PC-9 (cell line): ENCODE measurements at regions of chr3 and their contacts with region 1.

Region 1: DNA sequence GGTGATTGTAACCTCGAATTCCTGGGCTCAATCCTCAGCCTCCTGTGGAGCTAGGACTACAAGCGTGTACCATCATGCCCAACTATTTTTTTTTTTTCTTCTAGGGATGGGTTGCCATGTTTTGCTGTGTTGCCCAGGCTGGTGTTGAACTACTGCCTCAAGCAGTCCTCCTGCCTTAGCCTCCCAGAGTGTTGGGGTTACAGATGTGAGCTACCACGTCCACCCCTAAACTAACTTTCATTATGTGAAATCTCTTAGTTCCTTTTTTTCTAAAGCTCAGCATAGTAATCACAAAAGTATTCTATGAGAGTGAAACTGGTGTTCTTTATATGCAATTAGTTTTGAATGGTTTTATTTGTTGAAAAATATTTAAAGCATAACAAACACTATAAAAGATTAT is 92.1 kb downstream of the XRN1 start:
- DNase-seq: no peak
- H3K4me3 ChIP-seq: no peak overlapping the region
- H3K27ac ChIP-seq: no peak overlapping the region
- H3K4me1 ChIP-seq: no peaks in the 10 kb centered on the region
- H3K27me3 ChIP-seq: no peaks in the 10 kb centered on the region
- CTCF ChIP-seq: no peak

Region 2: DNA sequence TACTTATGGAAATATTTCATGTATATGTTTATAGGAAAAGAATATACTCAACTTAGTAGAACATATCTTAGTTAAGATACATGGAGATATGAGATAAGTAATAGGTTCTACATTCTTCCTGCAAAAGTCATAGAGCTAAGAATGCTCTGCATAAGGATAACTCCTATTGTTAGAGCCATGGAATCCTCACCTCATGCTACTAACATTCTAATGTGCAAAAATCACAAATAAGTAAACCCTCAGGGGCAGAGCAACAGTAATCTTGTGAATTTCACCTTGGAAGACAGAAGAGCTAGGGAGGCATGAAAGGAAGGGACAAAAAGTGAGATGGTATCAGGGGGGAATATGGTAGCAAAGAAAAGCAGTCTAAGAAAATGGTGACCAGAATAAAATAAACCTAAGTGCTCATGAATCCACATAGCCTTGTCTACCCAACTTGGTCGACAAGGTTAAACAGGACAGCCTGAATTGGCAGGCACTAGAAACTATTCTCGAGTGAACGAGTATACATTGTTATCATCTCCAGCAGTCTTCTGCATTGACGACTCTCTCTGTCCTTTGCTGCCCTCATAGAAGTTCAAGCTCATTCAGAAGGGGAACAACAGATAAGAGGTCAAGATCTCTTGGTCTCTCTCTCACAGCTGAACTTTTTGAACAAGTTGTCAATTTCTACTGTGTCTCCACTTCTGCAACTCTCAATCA is 39.4 kb after region 1 on chr3:
- CTCF ChIA-PET with region 1: no interaction called
- POLR2A ChIA-PET with region 1: interaction called, 10 read pairs
- intact Hi-C with region 1: no loop called
- DNase-seq: no peak
- H3K4me3 ChIP-seq: no peak overlapping the region
- H3K27ac ChIP-seq: no peak overlapping the region
- H3K4me1 ChIP-seq: no peaks in the 10 kb centered on the region
- H3K27me3 ChIP-seq: no peaks in the 10 kb centered on the region
- CTCF ChIP-seq: no peak